H1 (cell line): ENCODE measurements at regions of chr5 and their contacts with region 1.

Region 1: GRCh38 chr5:131589510-131590348 is 45.3 kb downstream of the RAPGEF6 start:
- DNase-seq: peak in 1 of 2 experiments; percentile 56
- H3K4me3 ChIP-seq: no peak overlapping the region
- H3K27ac ChIP-seq: no peak overlapping the region
- H3K4me1 ChIP-seq: no peaks in the 10 kb centered on the region; a peak in 1 of 7 replicates
- H3K27me3 ChIP-seq: no peaks in the 10 kb centered on the region
- CTCF ChIP-seq: peak in 2 of 3 experiments; percentile 63 to 88; a peak in 3 of 4 replicates
- EP300 ChIP-seq: no peak
- POLR2A ChIP-seq: no peak
- RAD21 ChIP-seq: peak; percentile 90 to 91

Region 2: GRCh38 chr5:131475541-131475941 is 114.2 kb before region 1 on chr5:
- CTCF ChIA-PET with region 1: no interaction called
- POLR2A ChIA-PET with region 1: no interaction called
- DNase-seq: no peak
- H3K4me3 ChIP-seq: no peak overlapping the region
- H3K27ac ChIP-seq: no peak overlapping the region
- H3K4me1 ChIP-seq: no peaks in the 10 kb centered on the region
- H3K27me3 ChIP-seq: no peaks in the 10 kb centered on the region
- CTCF ChIP-seq: no peak
- EP300 ChIP-seq: no peak
- POLR2A ChIP-seq: no peak
- RAD21 ChIP-seq: no peak

Region 3: GRCh38 chr5:131610198-131611063 is 20.7 kb after region 1 on chr5:
- CTCF ChIA-PET with region 1: interaction called, 13 read pairs
- POLR2A ChIA-PET with region 1: no interaction called
- DNase-seq: no peak
- H3K4me3 ChIP-seq: no peak overlapping the region
- H3K27ac ChIP-seq: no peak overlapping the region
- H3K4me1 ChIP-seq: peaks cover 0 to 8% (median 1%) of the 10 kb centered on the region in 4 experiments; a peak in 2 of 7 replicates
- H3K27me3 ChIP-seq: no peaks in the 10 kb centered on the region
- CTCF ChIP-seq: no peak
- EP300 ChIP-seq: no peak
- POLR2A ChIP-seq: no peak
- RAD21 ChIP-seq: no peak

Region 4: DNA sequence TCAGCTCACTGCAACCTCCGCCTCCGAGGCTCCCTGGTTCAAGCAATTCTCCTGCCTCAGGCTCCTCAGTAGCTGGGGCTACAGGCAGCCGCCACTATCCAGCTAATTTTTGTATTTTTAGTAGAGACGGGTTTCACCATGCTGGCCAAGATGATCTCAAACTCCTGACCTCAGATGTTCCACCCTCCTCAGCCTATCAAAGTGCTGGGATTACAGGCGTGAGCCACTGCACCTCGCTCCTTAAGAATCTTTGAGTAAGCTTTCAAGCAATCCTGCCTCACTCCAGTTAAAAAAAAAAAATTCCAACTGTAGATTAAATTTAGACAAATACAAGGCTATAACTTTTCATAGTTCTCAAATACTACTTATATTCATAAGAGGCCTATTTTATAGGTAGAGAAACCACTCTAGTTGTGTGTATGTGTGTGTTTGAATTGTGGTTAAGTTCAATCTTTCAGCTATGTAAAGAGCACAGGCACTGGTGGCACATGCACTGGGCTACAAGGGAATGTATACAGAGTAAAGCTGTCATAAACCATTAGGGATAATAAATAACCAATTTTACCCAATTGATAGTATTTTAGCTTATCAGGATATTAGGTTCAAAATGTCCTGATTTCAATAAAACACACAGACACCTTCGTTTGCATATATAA is 95.9 kb after region 1 on chr5:
- CTCF ChIA-PET with region 1: interaction called, 10 read pairs
- POLR2A ChIA-PET with region 1: no interaction called
- DNase-seq: no peak
- H3K4me3 ChIP-seq: no peak overlapping the region
- H3K27ac ChIP-seq: no peak overlapping the region
- H3K4me1 ChIP-seq: no peaks in the 10 kb centered on the region
- H3K27me3 ChIP-seq: no peaks in the 10 kb centered on the region
- CTCF ChIP-seq: no peak
- EP300 ChIP-seq: no peak
- POLR2A ChIP-seq: no peak
- RAD21 ChIP-seq: no peak

Region 5: DNA sequence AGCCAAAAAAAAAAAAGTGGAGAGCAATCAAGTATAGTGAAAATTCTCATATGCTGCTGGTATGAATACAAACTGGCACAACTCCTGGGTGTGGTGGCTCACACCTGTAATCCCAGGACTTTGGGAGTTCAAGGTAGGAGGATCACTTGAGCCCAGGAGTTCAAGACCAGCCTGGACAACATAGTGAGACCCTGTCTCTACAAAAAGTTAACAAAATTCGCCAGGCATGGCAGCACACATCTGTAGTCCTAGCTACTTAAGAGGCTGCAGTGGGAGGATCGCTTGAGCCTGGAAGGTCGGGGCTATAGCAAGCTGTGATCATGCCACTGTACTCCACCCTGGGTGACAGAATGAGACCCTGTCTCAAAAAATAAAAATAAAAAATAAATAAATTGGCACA is 155.4 kb after region 1 on chr5:
- CTCF ChIA-PET with region 1: no interaction called
- POLR2A ChIA-PET with region 1: no interaction called
- DNase-seq: no peak
- H3K4me3 ChIP-seq: no peak overlapping the region
- H3K27ac ChIP-seq: no peak overlapping the region
- H3K4me1 ChIP-seq: no peaks in the 10 kb centered on the region
- H3K27me3 ChIP-seq: no peaks in the 10 kb centered on the region
- CTCF ChIP-seq: no peak
- EP300 ChIP-seq: no peak
- POLR2A ChIP-seq: no peak
- RAD21 ChIP-seq: no peak

Region 6: DNA sequence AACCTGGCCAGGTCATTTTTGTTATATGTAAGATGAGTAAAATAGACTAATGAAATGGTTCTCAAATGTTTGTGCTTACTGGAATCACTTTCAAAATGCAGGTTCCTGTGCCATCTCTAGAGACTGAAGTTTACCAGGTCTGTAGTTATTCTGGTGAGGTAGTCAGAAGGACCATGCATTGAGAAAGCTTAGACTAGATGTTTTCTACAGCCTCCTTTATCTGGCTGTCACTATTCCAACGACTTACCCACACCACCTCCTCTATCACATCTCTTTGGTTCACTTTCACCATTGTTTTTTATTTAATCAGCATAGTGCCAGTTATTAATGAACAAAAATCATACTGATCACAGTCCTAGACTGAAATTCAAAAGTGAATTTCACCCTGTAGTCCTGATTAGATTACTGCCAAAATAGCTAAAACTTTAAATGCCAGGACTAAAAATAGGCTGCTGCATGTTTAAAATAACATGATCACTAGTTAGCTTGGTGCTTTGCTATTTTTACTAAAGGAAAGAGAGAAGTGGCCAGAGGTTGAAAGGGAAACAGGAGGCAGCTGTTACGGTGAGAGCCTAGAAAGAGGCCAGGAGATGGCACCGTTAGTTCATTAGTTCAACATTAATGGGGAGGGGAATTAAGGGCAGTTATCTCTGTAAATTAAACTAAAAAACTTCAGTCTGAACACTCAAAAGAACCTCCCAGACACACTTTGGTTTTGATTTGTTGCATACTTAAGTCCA is 221.0 kb after region 1 on chr5:
- CTCF ChIA-PET with region 1: interaction called, 11 read pairs
- POLR2A ChIA-PET with region 1: no interaction called
- DNase-seq: no peak
- H3K4me3 ChIP-seq: no peak overlapping the region
- H3K27ac ChIP-seq: no peak overlapping the region
- H3K4me1 ChIP-seq: 0 out of 7 replicates have a peak, but pooled peaks cover 0 to 2% (median 0%) of the 10 kb centered on the region in 4 experiments
- H3K27me3 ChIP-seq: no peaks in the 10 kb centered on the region
- CTCF ChIP-seq: peak in 2 of 3 experiments; percentile 53 to 64; a peak in 3 of 4 replicates
- EP300 ChIP-seq: no peak
- POLR2A ChIP-seq: no peak
- RAD21 ChIP-seq: peak; percentile 86 to 87

Region 7: DNA sequence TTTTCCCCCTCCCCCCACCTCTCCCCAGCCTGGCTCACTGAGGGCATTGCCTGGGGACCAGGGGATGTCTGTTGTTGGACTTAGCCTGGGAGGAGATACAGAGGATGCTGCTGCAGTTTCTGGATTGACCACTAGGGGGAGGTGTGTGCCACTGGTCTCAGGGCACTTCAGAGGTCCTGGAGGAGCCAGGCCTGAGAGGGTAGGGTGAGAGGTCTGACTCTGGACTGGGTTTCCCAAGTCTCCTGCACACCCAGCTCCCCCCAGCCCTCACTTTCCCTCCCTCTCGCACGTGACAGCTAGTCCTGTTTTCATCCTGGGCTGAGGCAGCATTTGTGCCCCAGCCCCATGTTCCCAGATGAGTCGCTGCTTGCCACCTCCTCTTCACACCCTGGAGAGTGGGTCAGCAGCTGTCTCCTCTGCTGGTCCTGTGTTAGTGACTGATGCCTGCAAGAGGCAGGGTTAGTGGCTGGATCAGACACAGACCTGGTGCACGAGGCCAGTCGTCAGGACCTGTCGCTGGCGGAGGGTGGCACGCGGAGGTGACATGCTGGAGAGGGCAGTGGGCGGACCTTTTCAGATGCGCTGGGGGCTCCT is 475.1 kb after region 1 on chr5:
- CTCF ChIA-PET with region 1: interaction called, 23 read pairs
- POLR2A ChIA-PET with region 1: no interaction called
- DNase-seq: peak; percentile 65 to 97
- H3K4me3 ChIP-seq: no peak overlapping the region
- H3K27ac ChIP-seq: no peak overlapping the region
- H3K4me1 ChIP-seq: no peaks in the 10 kb centered on the region; a peak in 1 of 7 replicates
- H3K27me3 ChIP-seq: no peaks in the 10 kb centered on the region
- CTCF ChIP-seq: peak in 2 of 3 experiments; percentile 88 to 98; a peak in 3 of 4 replicates
- EP300 ChIP-seq: no peak
- POLR2A ChIP-seq: no peak
- RAD21 ChIP-seq: peak; percentile 73 to 80